ENCODE measurements at regions of chr19 and their contacts with region 1.

Region 1: DNA sequence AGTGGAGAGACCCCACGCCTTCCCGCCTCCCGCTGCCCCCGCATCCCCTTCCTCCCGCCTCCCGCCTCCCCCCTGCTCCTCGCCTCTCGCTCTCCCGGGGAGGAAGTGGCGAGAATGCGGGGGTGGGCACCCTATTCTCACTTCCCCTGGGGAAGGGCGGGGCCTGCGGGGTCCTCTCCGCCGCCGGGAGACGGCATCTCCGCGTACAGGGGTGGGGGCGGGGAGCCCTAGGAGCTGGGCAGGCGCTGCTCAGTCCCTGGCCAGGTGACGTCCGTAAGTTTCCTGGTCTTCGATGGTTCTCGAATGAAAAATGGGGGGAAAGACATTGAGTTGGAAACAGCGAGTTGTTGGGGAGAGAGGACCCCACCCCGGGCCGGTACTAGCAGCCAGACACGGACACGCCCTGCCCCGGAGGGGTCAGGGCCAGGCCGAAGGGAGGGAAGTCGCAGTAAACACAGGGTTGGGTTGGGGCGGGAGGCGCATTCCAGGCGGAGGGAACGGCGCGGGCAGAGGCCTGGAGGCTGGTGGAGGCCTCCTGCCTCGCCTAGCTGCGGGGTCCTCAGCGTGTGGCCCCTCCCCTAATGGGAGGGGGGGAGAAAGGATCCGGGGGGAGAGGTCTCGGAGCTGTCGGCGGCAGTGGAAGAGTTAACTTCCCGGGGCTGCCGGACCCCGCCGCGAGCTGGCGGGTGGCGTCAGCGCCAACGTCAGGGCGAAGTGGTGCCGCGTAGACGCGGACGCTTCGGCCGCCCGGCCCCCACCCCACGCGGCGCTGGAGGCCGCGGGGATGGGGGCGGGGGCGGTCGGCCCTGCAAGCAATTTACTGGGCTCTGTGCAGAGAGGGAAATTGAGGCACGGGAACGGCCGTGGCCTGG is 10.4 kb upstream of the JUND start:
- DNase-seq: peak; percentile 90
- H3K4me3 Mint-ChIP-seq: peak overlapping the region; percentile 96
- H3K27ac Mint-ChIP-seq: peak overlapping the region; percentile 97
- H3K4me1 Mint-ChIP-seq: peaks cover 79% of the 10 kb centered on the region
- H3K27me3 Mint-ChIP-seq: no peaks in the 10 kb centered on the region

Region 2: DNA sequence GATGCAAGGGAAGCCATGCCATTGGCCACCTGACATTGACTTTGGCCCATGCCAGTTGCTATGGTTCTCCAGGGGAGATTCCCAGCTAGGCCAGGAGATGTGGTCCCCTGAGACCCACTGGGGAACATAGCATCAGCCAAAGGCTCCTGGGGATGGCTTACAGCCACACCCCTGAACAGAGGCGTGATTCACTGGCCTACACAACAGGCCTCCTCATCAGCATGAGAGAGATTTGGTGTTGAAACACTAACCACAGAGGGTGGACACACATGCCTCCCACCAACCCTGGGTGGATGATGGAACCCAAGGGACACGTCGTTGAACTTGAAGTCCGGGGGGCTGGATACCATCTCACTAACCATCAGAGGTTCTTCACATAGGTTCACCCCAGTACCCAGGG is 31.9 kb before region 1 on chr19:
- CTCF ChIA-PET with region 1: no interaction called
- POLR2A ChIA-PET with region 1: no interaction called
- DNase-seq: no peak
- H3K4me3 Mint-ChIP-seq: no peak overlapping the region
- H3K27ac Mint-ChIP-seq: no peak overlapping the region
- H3K4me1 Mint-ChIP-seq: peaks cover 2% of the 10 kb centered on the region
- H3K27me3 Mint-ChIP-seq: peaks cover 3% of the 10 kb centered on the region

Region 3: GRCh38 chr19:18304458-18305310 is 12.9 kb after region 1 on chr19:
- CTCF ChIA-PET with region 1: interaction called, 38 read pairs
- POLR2A ChIA-PET with region 1: interaction called, 1,184 read pairs
- DNase-seq: peak; percentile 86
- H3K4me3 Mint-ChIP-seq: peak overlapping the region; percentile 93
- H3K27ac Mint-ChIP-seq: peak overlapping the region; percentile 94
- H3K4me1 Mint-ChIP-seq: peaks cover 53% of the 10 kb centered on the region
- H3K27me3 Mint-ChIP-seq: no peaks in the 10 kb centered on the region

Measured in activated CD4-positive, alpha-beta memory T cell treated with anti-CD3 and anti-CD28 coated beads, Interleukin-2, amount 10 ng/mL, durations not matched to agents 7 days and 5 days (primary cell).